Heart left ventricle (tissue), 16 donors: ENCODE measurements at regions of chr9 and their contacts with region 1.

Region 1: GRCh38 chr9:108053555-108054061 is 564.0 kb upstream of the KLF4 start:
- DNase-seq: peak in 4 of 5 donors; percentile 29 to 72 (median 56)
- ATAC-seq: peak; percentile 45 to 76 (median 54)
- H3K4me3 ChIP-seq: peak overlapping the region in 1 of 12 donors; percentile 1
- H3K27ac ChIP-seq: peak overlapping the region in 8 of 12 donors; percentile 3 to 65 (median 38)
- H3K4me1 ChIP-seq: peaks cover 0 to 43% (median 14%) of the 10 kb centered on the region in 12 donors
- H3K27me3 ChIP-seq: peaks cover 0 to under 1% (median 0%) of the 10 kb centered on the region in 9 donors
- CTCF ChIP-seq: no peak
- POLR2A ChIP-seq: no peak

Region 2: GRCh38 chr9:107667231-107668070 is 386.2 kb before region 1 on chr9:
- intact Hi-C with region 1: loop called in 1 of 10 experiments (anchors 10 kb)
- DNase-seq: peak in 4 of 5 donors; percentile 49 to 72 (median 56)
- ATAC-seq: peak; percentile 79 to 94 (median 87)
- H3K4me3 ChIP-seq: no peak overlapping the region
- H3K27ac ChIP-seq: peak overlapping the region; percentile 54 to 90 (median 75)
- H3K4me1 ChIP-seq: peaks cover 0 to 18% (median 13%) of the 10 kb centered on the region in 12 donors
- H3K27me3 ChIP-seq: no peaks in the 10 kb centered on the region
- CTCF ChIP-seq: no peak
- POLR2A ChIP-seq: no peak

Region 3: DNA sequence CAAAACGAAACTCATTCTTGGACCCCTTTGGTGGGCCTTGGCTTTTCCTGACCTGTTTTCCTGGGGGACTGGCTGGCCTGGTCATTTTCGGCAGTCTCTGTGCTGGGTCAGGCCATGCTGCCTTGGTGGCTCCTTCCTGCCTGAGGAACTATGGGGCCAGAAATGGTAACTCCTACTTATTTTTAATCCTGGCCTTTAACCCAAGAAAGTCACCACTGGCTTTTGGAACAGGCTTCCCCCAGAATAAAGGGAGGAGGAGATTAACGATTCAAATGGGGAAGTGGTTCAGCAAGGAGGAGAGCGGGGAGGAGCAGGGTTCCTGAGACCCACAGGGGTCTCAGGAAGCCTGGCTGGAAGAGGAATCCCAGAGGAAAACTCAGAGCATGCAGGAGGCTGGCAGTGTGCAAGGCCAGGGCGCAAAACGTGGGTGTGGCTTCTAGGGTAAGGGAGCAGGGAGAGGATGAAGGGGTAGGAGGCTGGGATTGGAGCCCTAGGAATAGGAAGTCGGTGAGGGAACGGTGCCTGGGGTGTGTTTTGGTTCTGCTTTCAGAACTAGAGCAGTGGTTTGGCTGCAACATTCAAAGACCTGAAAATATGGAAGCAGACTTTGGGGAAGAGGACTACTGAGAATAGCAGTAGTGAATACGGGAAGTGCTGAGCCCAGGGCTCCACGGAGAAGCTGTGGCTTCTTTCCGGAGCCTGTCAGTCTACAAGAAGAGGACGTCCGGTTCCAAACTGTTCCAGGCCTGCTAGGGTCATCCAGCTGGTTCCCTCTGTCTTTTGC is 293.0 kb before region 1 on chr9:
- intact Hi-C with region 1: loop called in 1 of 10 experiments (anchors 10 kb)
- DNase-seq: peak; percentile 53 to 77 (median 66)
- ATAC-seq: peak; percentile 88 to 93 (median 90)
- H3K4me3 ChIP-seq: no peak overlapping the region
- H3K27ac ChIP-seq: peak overlapping the region in 10 of 12 donors; percentile 7 to 85 (median 42)
- H3K4me1 ChIP-seq: peaks cover 0 to 46% (median 6%) of the 10 kb centered on the region in 12 donors
- H3K27me3 ChIP-seq: no peaks in the 10 kb centered on the region
- CTCF ChIP-seq: no peak
- POLR2A ChIP-seq: no peak

Region 4: DNA sequence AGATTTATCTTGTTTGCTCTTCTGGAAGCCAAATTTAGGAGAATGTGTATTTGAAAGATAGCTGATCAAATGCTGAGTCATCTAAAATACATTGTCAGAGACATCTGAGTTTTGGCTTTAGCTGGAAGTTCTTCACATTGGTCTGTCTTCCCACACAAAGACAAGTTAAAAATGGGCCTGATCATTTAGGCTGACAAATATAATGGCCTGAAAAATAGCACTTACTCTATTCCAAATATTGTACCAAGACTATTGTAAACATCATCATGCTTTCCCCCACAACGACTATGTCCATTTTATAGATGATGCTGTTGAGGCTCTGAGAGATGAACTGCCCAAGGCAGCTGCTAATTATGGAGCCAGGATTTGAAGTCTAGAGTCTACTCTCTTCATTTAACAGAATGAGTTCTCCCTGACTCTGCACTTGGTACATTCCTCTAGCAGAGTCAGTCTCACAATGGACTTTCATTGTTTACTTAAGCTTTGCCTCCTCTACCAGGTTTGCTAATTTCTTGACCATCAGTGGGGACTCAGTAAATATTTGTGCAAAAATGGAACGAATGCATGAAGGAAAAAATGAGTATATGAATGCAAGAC is 55.3 kb after region 1 on chr9:
- intact Hi-C with region 1: no loop called
- DNase-seq: no peak
- ATAC-seq: no peak
- H3K4me3 ChIP-seq: no peak overlapping the region
- H3K27ac ChIP-seq: no peak overlapping the region
- H3K4me1 ChIP-seq: no peaks in the 10 kb centered on the region
- H3K27me3 ChIP-seq: no peaks in the 10 kb centered on the region
- CTCF ChIP-seq: no peak
- POLR2A ChIP-seq: no peak

Region 5: GRCh38 chr9:108142504-108143201 is 89.0 kb after region 1 on chr9:
- intact Hi-C with region 1: loop called in 1 of 10 experiments (anchors 5 kb)
- DNase-seq: peak; percentile 76 to 85 (median 80)
- ATAC-seq: peak; percentile 98 to 99 (median 98)
- H3K4me3 ChIP-seq: no peak overlapping the region
- H3K27ac ChIP-seq: peak overlapping the region; percentile 53 to 91 (median 80)
- H3K4me1 ChIP-seq: peaks cover 0 to 25% (median 16%) of the 10 kb centered on the region in 12 donors
- H3K27me3 ChIP-seq: no peaks in the 10 kb centered on the region
- CTCF ChIP-seq: no peak
- POLR2A ChIP-seq: peak in 1 of 2 donors; percentile 5